Activated T-helper 2 cell treated with anti-CD3 and anti-CD28 coated beads, Interferon-gamma antibody, Interleukin-2, Interleukin-4, amounts not matched to agents 10 μg/mL and 5 μg/mL and 100 μg/mL, durations not matched to agents 14 hours and 24 hours and 36 hours (primary cell): ENCODE measurements at regions of chr2 and their contacts with region 1.

Region 1: DNA sequence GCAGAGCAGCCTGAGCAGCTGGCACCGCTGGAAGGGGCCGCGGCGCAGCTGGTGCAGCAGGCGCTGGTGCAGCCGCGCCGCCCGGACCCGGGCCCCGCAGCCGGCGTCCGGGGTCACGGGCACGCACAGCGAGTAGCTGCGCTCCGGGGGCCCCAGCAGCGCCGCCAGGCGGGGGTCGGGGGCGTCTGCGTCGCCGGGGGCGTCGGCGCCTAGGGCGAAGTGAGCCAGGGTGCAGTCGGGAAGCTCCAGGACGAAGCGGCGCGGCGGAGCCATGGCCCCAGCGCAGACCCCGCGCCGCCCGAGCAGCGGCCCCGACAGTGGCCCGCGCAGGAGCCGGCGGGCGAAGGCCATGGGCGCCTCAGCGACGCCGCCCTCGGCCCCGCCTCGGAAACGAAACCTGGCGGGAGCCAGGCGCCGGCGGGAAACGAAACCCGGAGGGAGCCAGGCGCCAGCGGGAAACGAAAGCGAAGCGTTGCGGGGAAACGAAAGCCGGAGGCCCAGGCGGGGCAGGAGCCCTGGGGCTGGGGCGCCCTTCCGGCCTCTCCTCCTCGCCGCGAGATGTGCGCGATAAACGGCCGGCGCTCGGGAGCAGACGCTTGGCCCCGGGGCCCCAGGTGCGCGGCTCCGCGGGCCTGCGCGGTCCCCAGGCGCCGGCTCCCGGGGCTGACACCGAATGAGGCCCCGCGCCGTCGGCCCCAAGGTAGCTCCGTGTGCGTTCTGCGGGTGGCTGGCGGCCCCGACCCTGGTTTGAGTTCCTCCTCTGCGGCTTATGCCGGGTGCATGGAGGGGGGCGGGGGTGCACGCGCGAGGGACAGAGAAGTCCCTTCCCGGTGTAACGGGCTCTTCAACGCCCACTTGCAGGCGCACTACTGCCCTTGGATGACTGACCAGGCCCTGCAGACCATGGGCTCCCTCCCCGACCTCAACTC is at the start of gene CMPK2:
- DNase-seq: peak; percentile 92
- H3K4me3 Mint-ChIP-seq: peak within 1 kb of the TSS; percentile 95
- H3K27ac Mint-ChIP-seq: peak within 1 kb of the TSS; percentile 90
- H3K4me1 Mint-ChIP-seq: peaks cover 40% of the 10 kb centered on the region
- H3K27me3 Mint-ChIP-seq: no peaks in the 10 kb centered on the region
- total RNA-seq, gene CMPK2: 2.8 and 2.9 TPM in 2 replicates

Region 2: GRCh38 chr2:6835467-6835866 is 30.1 kb before region 1 on chr2:
- intact Hi-C with region 1: loop called (anchors 1 kb)
- DNase-seq: no peak
- H3K4me3 Mint-ChIP-seq: no peak overlapping the region
- H3K27ac Mint-ChIP-seq: peak overlapping the region; percentile 7
- H3K4me1 Mint-ChIP-seq: peaks cover 23% of the 10 kb centered on the region
- H3K27me3 Mint-ChIP-seq: no peaks in the 10 kb centered on the region

Region 3: DNA sequence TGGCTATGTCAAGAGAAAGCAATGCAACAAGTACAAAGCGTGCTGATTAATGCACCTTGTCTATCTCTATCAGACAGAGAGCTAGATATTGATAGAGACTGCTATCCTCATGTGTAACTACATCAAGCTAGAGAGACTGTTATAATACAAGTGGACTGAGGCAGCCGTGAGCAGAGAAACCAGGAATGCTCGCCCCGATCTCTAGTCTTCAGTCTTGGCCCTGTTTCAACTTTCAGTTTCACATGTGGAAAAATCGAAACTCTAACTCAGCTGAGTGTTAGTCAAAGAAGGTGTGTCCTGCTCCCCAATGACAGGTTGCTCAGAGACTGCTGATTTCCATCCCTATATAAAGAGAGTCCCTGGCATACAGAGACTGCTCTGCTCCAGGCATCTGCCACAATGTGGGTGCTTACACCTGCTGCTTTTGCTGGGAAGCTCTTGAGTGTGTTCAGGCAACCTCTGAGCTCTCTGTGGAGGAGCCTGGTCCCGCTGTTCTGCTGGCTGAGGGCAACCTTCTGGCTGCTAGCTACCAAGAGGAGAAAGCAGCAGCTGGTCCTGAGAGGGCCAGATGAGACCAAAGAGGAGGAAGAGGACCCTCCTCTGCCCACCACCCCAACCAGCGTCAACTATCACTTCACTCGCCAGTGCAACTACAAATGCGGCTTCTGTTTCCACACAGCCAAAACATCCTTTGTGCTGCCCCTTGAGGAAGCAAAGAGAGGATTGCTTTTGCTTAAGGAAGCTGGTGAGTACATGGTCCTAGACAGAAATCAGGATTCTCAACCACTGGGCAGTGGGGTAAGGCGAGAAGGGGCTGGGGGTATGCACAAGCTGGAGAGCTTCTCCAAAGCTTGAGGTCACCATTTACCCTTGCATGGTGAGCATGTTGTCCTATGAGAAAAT is 12.0 kb after region 1 on chr2 and contains the start of gene RSAD2:
- intact Hi-C with region 1: loop called (anchors 1 kb)
- DNase-seq: peak; percentile 42
- H3K4me3 Mint-ChIP-seq: peak within 1 kb of the TSS; percentile 74
- H3K27ac Mint-ChIP-seq: peak within 1 kb of the TSS; percentile 21
- H3K4me1 Mint-ChIP-seq: peaks cover 80% of the 10 kb centered on the region
- H3K27me3 Mint-ChIP-seq: no peaks in the 10 kb centered on the region
- total RNA-seq, gene RSAD2: 2.0 and 2.2 TPM in 2 replicates